ENCODE measurements at regions of chr2 and their contacts with region 1.

Region 1: DNA sequence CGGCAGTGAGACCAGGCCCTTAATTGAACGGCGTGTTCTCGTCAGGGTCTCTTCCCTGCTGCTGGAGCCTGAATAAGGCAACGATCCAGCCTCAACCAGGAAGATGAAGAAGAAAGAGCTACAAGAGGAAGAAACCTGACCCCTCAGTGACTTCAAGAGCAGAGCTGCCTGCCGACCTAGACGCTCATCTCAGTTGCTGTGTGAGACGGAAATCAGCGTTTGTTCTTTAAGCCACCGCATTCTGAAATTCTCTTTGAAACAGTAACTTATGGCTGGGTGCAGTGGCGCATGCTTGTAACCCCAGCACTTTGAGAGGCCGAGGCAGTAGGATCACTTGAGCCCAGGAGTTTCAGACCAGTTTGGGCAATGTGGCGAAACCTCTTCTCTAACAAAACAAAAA is 29.6 kb upstream of the KCNG3 start:
- DNase-seq: no peak
- ATAC-seq: no peak
- H3K4me3 ChIP-seq: no peak overlapping the region
- H3K27ac ChIP-seq: no peak overlapping the region
- H3K4me1 ChIP-seq: peaks cover 16% of the 10 kb centered on the region
- H3K27me3 ChIP-seq: no peaks in the 10 kb centered on the region
- CTCF ChIP-seq: no peak
- EP300 ChIP-seq: no peak
- POLR2A ChIP-seq: no peak
- RAD21 ChIP-seq: no peak

Region 2: GRCh38 chr2:42457011-42457410 is 66.3 kb before region 1 on chr2:
- CTCF ChIA-PET with region 1: no interaction called
- POLR2A ChIA-PET with region 1: no interaction called
- in situ Hi-C with region 1: no loop called
- intact Hi-C with region 1: no loop called
- DNase-seq: peak; percentile 11
- ATAC-seq: peak; percentile 71
- H3K4me3 ChIP-seq: no peak overlapping the region
- H3K27ac ChIP-seq: no peak overlapping the region
- H3K4me1 ChIP-seq: peaks cover 8% of the 10 kb centered on the region
- H3K27me3 ChIP-seq: no peaks in the 10 kb centered on the region
- CTCF ChIP-seq: no peak
- EP300 ChIP-seq: no peak
- POLR2A ChIP-seq: no peak
- RAD21 ChIP-seq: no peak

Region 3: DNA sequence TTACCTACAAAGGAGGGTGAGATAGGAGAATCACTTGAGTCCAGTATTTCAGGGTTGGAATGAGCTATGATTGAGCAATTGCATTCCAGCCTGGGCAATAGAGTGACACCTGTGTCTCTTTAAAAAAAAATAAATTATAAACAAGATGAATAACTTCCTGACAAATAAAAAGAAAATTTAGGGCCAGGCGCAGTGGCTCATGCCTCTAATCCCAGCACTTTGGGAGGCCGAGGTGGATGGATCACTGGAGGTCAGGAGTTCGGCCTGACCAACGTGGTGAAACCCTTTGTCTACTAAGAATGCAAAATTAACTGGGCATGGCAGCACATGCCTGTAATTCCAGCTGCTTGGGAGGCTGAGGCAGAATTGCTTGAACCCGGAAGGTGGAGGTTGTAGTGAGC is 62.5 kb after region 1 on chr2:
- CTCF ChIA-PET with region 1: no interaction called
- POLR2A ChIA-PET with region 1: no interaction called
- in situ Hi-C with region 1: no loop called
- intact Hi-C with region 1: loop called (anchors 2 kb)
- DNase-seq: peak; percentile 57
- ATAC-seq: peak; percentile 62
- H3K4me3 ChIP-seq: no peak overlapping the region
- H3K27ac ChIP-seq: peak overlapping the region; percentile 5
- H3K4me1 ChIP-seq: peaks cover 14% of the 10 kb centered on the region
- H3K27me3 ChIP-seq: no peaks in the 10 kb centered on the region
- CTCF ChIP-seq: no peak
- EP300 ChIP-seq: no peak
- POLR2A ChIP-seq: no peak
- RAD21 ChIP-seq: no peak

Measured in HepG2 (cell line).